AG04449 (cell line): ENCODE measurements at regions of chr14 and their contacts with region 1.

Region 1: DNA sequence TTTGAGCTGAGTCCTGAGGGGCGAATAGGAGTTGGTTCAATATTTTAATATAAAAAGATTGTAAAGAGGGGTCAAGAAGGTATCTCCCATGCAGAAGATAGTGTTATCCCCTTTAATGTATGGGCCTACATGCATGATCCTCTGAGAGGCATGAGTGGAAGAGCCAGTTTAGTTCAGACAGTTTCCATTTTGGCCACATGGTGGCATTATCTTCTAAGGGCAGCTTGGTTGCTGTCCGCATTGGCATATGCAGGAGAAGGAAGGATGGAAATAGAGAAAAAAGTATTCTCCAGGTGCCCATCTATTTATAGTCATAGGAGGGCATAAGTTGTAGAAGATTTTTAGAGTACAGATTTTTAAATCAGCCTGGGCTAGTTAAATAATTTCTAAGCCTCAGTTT is 5.4 kb downstream of the SAMD4A start:
- DNase-seq: no peak
- H3K4me3 ChIP-seq: no peak overlapping the region
- CTCF ChIP-seq: peak; percentile 19

Region 2: DNA sequence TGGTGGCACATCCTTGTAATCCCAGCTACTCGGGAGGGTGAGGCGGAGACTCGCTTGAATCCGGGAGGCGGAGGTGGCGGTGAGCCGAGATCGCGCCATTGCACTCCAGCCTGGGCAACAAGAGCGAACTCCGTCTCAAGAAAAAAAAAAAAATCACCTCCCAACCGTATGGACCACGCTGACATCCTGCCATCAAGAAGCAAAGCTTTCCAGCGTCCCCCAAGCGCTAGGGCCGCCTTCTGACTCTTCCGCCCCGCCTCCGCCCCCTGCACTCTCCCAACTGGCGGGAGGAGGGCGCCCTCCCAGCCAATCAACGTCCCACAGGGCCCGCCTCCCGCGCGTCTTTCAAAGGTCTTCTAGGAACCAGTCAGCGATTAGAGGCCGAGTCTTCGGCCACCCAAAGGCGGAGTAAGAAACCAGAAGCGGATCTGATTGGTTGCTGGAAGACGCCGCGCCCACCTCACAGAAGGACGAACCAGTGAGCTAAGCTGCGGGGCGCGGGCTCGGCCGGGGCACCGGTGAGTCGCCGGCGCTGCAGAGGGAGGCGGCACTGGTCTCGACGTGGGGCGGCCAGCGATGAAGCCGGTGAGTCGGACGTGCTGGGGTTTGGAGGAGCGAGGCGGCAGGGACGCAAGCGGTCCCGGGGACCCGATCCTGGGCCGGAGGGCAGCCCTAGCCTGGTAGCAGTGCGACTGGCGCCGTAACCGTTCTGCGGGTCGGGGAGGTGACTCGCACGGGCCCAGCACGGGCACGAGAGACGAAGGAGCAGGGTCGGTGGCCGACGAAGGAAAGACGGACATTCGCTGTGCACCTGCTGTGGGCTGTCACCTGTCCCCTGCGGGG is 175.6 kb before region 1 on chr14 and contains the start of gene CDKN3:
- CTCF ChIA-PET with region 1: no interaction called
- POLR2A ChIA-PET with region 1: no interaction called
- DNase-seq: peak; percentile 96
- H3K4me3 ChIP-seq: peak within 1 kb of the TSS; percentile 85
- CTCF ChIP-seq: peak; percentile 60

Region 3: GRCh38 chr14:54487771-54488170 is 84.5 kb before region 1 on chr14:
- CTCF ChIA-PET with region 1: no interaction called
- POLR2A ChIA-PET with region 1: no interaction called
- DNase-seq: no peak
- H3K4me3 ChIP-seq: peak overlapping the region; percentile 96
- CTCF ChIP-seq: no peak

Region 4: GRCh38 chr14:54584097-54584496 is 11.8 kb after region 1 on chr14:
- CTCF ChIA-PET with region 1: interaction called, 11 read pairs
- POLR2A ChIA-PET with region 1: no interaction called
- DNase-seq: no peak
- H3K4me3 ChIP-seq: no peak overlapping the region
- CTCF ChIP-seq: no peak

Region 5: GRCh38 chr14:54691525-54692283 is 119.4 kb after region 1 on chr14:
- CTCF ChIA-PET with region 1: interaction called, 168 read pairs
- POLR2A ChIA-PET with region 1: interaction called, 34 read pairs
- DNase-seq: no peak
- H3K4me3 ChIP-seq: no peak overlapping the region
- CTCF ChIP-seq: peak; percentile 94